CD8-positive, alpha-beta T cell (primary cell): ENCODE measurements at regions of chrX and their contacts with region 1.

Region 1: GRCh38 chrX:150982788-150983520 is at the start of gene HMGB3:
- DNase-seq: peak; percentile 40 to 83 (median 67)
- ATAC-seq: peak; percentile 97
- H3K4me3 ChIP-seq: peak within 1 kb of the TSS; percentile 45 to 48
- H3K4me3 Mint-ChIP-seq: peak within 1 kb of the TSS; percentile 73
- H3K27ac ChIP-seq: no peak within 1 kb of the TSS
- H3K27ac Mint-ChIP-seq: no peak within 1 kb of the TSS
- H3K4me1 ChIP-seq: no peaks in the 10 kb centered on the region
- H3K4me1 Mint-ChIP-seq: peaks cover 11% of the 10 kb centered on the region
- H3K27me3 ChIP-seq: peaks cover 0 to 4% of the 10 kb centered on the region in 2 experiments
- H3K27me3 Mint-ChIP-seq: peaks cover 8% of the 10 kb centered on the region
- CTCF ChIP-seq: no peak
- total RNA-seq, gene HMGB3: 4.3 to 6.3 TPM

Region 2: DNA sequence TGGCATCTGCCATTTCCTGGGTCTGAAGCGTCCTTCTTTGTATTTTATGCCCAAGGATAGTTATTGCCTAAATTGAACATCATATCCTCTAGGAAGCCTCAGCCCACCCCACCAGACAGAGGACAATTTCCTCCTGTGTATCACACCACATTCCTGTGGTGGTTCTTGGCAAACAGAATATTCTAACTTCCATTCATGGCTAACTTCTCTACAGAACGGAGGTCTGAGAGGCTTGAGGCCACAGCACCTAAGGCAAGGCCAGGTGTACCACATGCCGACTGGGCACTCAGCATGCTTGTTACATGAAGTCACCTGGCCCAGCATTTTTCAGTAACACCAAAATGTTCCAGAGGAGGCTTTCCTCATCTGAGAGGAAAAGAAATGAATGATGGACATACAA is 126.8 kb before region 1 on chrX:
- CTCF ChIA-PET with region 1: no interaction called
- POLR2A ChIA-PET with region 1: no interaction called
- intact Hi-C with region 1: no loop called
- DNase-seq: no peak
- ATAC-seq: no peak
- H3K4me3 ChIP-seq: no peak overlapping the region
- H3K4me3 Mint-ChIP-seq: no peak overlapping the region
- H3K27ac ChIP-seq: no peak overlapping the region
- H3K27ac Mint-ChIP-seq: no peak overlapping the region
- H3K4me1 ChIP-seq: no peaks in the 10 kb centered on the region
- H3K4me1 Mint-ChIP-seq: peaks cover 2% of the 10 kb centered on the region
- H3K27me3 ChIP-seq: no peaks in the 10 kb centered on the region
- H3K27me3 Mint-ChIP-seq: no peaks in the 10 kb centered on the region
- CTCF ChIP-seq: no peak

Region 3: GRCh38 chrX:150898343-150899190 is 84.4 kb before region 1 on chrX and contains the start of gene CD99L2:
- CTCF ChIA-PET with region 1: no interaction called
- POLR2A ChIA-PET with region 1: no interaction called
- intact Hi-C with region 1: loop called (anchors 1 to 2 kb)
- DNase-seq: peak; percentile 83 to 93 (median 89)
- ATAC-seq: peak; percentile 92
- H3K4me3 ChIP-seq: peak within 1 kb of the TSS; percentile 76 to 77
- H3K4me3 Mint-ChIP-seq: peak within 1 kb of the TSS; percentile 91
- H3K27ac ChIP-seq: peak within 1 kb of the TSS; percentile 36 to 63
- H3K27ac Mint-ChIP-seq: peak within 1 kb of the TSS; percentile 67
- H3K4me1 ChIP-seq: peaks cover 6% of the 10 kb centered on the region
- H3K4me1 Mint-ChIP-seq: peaks cover 11% of the 10 kb centered on the region
- H3K27me3 ChIP-seq: no peaks in the 10 kb centered on the region
- H3K27me3 Mint-ChIP-seq: no peaks in the 10 kb centered on the region
- CTCF ChIP-seq: no peak
- total RNA-seq, gene CD99L2: 6.4 TPM